PC-9 (cell line): ENCODE measurements at regions of chr9 and their contacts with region 1.

Region 1: GRCh38 chr9:130255631-130256134 is 9.9 kb upstream of the HMCN2 start:
- DNase-seq: no peak
- H3K4me3 ChIP-seq: no peak overlapping the region
- H3K27ac ChIP-seq: no peak overlapping the region
- H3K4me1 ChIP-seq: no peaks in the 10 kb centered on the region
- H3K27me3 ChIP-seq: peaks cover 16% of the 10 kb centered on the region
- CTCF ChIP-seq: no peak

Region 2: GRCh38 chr9:130490981-130491380 is 235.3 kb after region 1 on chr9:
- CTCF ChIA-PET with region 1: no interaction called
- POLR2A ChIA-PET with region 1: no interaction called
- intact Hi-C with region 1: no loop called
- DNase-seq: no peak
- H3K4me3 ChIP-seq: no peak overlapping the region
- H3K27ac ChIP-seq: no peak overlapping the region
- H3K4me1 ChIP-seq: no peaks in the 10 kb centered on the region
- H3K27me3 ChIP-seq: no peaks in the 10 kb centered on the region
- CTCF ChIP-seq: no peak

Region 3: DNA sequence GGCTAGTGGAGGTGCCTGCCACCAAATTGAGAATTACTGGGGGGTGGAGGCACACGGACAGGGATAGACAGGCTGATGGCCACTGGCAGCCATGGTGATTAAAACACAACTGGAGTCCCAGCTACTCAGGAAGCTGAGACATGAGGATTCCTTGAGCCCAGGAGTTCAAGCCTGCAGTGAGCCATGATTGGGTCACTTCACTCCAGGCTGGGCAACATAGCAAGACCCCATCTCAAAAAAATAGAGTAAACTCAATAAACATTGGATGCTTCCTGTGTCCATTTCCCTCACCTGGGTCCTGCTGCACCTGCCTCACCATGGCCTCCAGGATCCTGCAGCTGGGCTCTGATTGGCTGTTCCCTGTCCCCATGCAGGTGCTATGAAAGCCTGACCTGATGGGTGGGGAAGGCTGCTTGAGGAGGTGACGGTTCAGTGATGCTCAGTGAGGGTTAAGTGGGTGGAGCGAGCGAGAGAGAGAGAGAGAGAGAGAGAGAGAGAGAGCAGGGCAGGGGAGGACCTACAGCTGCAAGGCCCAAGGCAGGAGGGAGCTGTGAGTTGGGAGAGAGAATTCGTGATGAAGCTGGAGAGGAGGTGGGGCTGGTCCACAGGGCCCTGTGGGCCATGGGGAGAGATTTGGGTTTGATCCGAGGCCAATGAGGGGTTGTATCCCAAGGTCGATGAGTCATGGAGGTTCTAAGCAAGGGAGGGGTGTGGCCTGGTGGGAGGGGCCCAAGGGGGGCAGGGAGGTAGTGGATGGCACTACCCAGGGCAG is 287.0 kb after region 1 on chr9:
- CTCF ChIA-PET with region 1: no interaction called
- POLR2A ChIA-PET with region 1: interaction called, 25 read pairs
- intact Hi-C with region 1: no loop called
- DNase-seq: peak in 1 of 2 experiments; percentile 31
- H3K4me3 ChIP-seq: no peak overlapping the region
- H3K27ac ChIP-seq: no peak overlapping the region
- H3K4me1 ChIP-seq: peaks cover 6% of the 10 kb centered on the region
- H3K27me3 ChIP-seq: no peaks in the 10 kb centered on the region
- CTCF ChIP-seq: no peak

Region 4: DNA sequence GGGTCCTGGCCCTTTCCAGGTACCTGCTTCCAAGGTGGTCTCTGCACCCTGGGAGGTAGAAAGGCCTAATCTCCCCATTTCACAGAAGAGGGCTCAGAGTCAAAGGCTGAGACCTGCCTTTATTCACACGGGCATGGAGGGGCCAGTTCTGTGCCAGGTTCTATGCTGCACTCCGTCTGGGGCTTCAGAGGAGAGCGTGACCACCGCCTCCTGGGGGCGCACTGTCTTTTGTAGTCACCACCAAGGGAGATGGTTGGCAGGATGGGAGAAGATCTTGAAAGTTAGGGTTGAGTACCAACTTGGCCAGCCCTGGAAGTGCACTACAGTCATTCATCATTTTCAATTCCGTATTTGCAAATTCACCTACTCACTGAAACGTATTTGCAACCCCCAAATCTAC is 385.0 kb after region 1 on chr9:
- CTCF ChIA-PET with region 1: no interaction called
- POLR2A ChIA-PET with region 1: no interaction called
- intact Hi-C with region 1: no loop called
- DNase-seq: no peak
- H3K4me3 ChIP-seq: no peak overlapping the region
- H3K27ac ChIP-seq: no peak overlapping the region
- H3K4me1 ChIP-seq: no peaks in the 10 kb centered on the region
- H3K27me3 ChIP-seq: no peaks in the 10 kb centered on the region
- CTCF ChIP-seq: no peak